ENCODE measurements at regions of chr12 and their contacts with region 1.

Region 1: DNA sequence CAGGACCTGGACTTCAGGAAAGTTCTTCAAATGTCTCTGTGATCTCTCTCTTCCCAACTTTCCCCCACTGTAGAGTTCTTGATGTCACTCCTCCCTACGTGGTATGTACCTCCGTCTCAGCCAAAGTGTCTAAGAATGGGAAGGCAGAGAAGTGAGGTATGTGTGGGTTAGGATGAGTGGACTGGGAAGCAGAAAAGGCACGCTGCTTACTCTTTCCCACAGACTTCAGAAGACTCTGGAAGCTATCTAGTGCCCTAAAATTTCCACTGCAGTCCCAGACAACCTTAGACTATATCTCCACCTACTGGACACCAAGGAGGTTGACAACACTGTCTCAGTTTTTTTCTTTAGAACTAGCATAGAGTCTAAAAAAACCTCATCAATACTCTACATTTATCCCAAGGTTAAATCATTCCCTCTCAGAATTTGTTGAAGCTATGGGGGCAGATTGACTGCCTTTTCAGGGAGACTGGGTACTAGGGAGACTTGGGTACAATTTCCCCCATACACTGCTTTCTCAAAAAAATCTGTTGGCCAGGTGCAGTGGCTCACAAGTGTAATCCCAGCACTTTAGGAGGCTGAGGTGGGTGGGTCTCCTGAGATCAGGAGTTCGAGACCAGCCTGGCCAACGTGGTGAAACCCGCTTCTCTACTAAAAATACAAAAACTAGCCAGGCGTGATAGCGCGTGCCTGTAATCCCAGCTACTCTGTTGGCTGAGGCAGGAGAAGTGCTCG is 20.6 kb upstream of the ITGA5 start:
- DNase-seq: no peak
- ATAC-seq: peak; percentile 88 to 98 (median 94)
- H3K4me3 ChIP-seq: no peak overlapping the region
- H3K27ac ChIP-seq: no peak overlapping the region
- H3K4me1 ChIP-seq: peaks cover 0 to 5% (median 0%) of the 10 kb centered on the region in 3 donors
- H3K27me3 ChIP-seq: no peaks in the 10 kb centered on the region
- CTCF ChIP-seq: peak; percentile 69 to 81 (median 70)

Region 2: GRCh38 chr12:54352022-54352531 is 87.6 kb before region 1 on chr12:
- intact Hi-C with region 1: no loop called
- DNase-seq: peak; percentile 70 to 84 (median 80)
- ATAC-seq: peak; percentile 39 to 78 (median 66)
- H3K4me3 ChIP-seq: no peak overlapping the region
- H3K27ac ChIP-seq: peak overlapping the region; percentile 58 to 85 (median 74)
- H3K4me1 ChIP-seq: peaks cover 11 to 27% (median 15%) of the 10 kb centered on the region in 3 donors
- H3K27me3 ChIP-seq: no peaks in the 10 kb centered on the region
- CTCF ChIP-seq: no peak

Region 3: DNA sequence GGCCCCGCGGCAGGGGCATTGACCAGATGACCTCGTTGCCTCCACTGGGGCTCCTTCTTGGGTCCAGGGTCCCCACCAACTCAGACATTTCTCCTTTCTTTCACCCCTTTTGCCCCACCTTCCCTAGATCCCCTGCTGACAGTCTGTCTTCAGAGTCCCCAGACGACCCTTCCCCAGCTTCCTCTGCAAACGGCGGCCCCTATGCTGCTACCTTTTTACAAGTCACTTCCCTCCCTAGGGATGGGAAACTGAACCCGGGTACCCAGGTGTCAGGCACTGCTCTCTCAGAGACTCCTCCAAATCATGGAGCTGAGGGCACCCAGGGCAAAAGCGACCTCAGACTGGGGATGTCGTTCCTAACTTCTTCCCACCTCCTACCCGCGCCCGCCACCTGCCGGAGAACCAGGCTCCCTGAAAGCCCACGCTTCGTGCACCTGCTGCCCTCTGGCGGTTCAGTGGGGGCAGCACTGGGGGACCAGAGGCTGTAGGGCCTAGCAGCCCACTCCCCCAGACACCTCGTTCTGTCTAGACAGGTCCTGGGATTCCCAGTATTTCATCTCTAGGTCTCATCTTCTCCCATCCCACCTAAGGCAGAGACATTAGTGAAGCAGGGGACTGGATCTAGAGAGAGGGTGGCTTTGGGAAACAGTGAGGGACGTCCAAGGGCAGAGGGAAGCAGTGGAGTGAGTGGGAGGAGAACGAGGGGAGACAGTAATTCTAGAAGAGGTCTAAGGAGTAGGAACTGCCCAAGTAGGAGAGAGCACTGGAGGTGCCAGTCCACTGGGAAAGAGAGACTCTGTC is 60.1 kb before region 1 on chr12:
- intact Hi-C with region 1: loop called in 1 of 3 experiments (anchors 10 kb)
- DNase-seq: peak; percentile 84 to 96 (median 92)
- ATAC-seq: peak; percentile 92 to 95 (median 94)
- H3K4me3 ChIP-seq: peak overlapping the region in 3 of 4 donors; percentile 23 to 51 (median 39)
- H3K27ac ChIP-seq: peak overlapping the region in 1 of 4 donors; percentile 46
- H3K4me1 ChIP-seq: no peaks in the 10 kb centered on the region
- H3K27me3 ChIP-seq: no peaks in the 10 kb centered on the region
- CTCF ChIP-seq: peak; percentile 100

Region 4: GRCh38 chr12:54404061-54405004 is 35.4 kb before region 1 on chr12:
- intact Hi-C with region 1: loop called in 2 of 3 experiments (anchors 5 kb)
- DNase-seq: peak in 4 of 6 donors; percentile 61 to 72 (median 64)
- ATAC-seq: peak in 3 of 4 donors; percentile 63 to 70 (median 66)
- H3K4me3 ChIP-seq: no peak overlapping the region
- H3K27ac ChIP-seq: no peak overlapping the region
- H3K4me1 ChIP-seq: no peaks in the 10 kb centered on the region
- H3K27me3 ChIP-seq: no peaks in the 10 kb centered on the region
- CTCF ChIP-seq: peak; percentile 91 to 95 (median 92)

Region 5: DNA sequence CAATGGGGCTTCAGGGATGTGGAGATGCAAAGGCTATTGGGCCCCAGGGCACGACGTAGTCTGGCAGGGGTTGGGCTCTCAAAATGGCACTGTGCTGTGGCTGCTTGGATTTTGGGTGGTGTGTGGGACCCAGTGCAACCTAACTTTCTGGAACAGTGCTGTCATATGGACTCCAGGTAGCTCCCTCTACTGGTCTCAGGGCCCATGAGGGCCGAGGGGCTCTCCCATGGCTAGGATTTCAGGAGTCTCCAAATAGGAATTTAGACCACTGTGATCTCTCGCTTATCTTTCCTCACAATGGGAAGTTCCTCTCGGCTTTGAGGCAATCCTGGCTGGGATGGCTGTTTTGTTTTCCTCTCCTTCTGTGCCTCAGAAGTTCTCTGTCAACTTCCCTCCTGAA is 346.4 kb after region 1 on chr12:
- intact Hi-C with region 1: no loop called
- DNase-seq: no peak
- ATAC-seq: no peak
- H3K4me3 ChIP-seq: no peak overlapping the region
- H3K27ac ChIP-seq: no peak overlapping the region
- H3K4me1 ChIP-seq: no peaks in the 10 kb centered on the region
- H3K27me3 ChIP-seq: no peaks in the 10 kb centered on the region
- CTCF ChIP-seq: no peak

Measured in pancreas (tissue), 10 donors.